CD8-positive, alpha-beta T cell (primary cell): ENCODE measurements at regions of chr20 and their contacts with region 1.

Region 1: GRCh38 chr20:8352486-8352885 is 220.4 kb downstream of the PLCB1 start:
- DNase-seq: no peak
- ATAC-seq: no peak
- H3K4me3 ChIP-seq: no peak overlapping the region
- H3K4me3 Mint-ChIP-seq: no peak overlapping the region
- H3K27ac ChIP-seq: no peak overlapping the region
- H3K27ac Mint-ChIP-seq: no peak overlapping the region
- H3K4me1 ChIP-seq: no peaks in the 10 kb centered on the region
- H3K4me1 Mint-ChIP-seq: no peaks in the 10 kb centered on the region
- H3K27me3 ChIP-seq: no peaks in the 10 kb centered on the region
- H3K27me3 Mint-ChIP-seq: no peaks in the 10 kb centered on the region
- CTCF ChIP-seq: no peak

Region 2: DNA sequence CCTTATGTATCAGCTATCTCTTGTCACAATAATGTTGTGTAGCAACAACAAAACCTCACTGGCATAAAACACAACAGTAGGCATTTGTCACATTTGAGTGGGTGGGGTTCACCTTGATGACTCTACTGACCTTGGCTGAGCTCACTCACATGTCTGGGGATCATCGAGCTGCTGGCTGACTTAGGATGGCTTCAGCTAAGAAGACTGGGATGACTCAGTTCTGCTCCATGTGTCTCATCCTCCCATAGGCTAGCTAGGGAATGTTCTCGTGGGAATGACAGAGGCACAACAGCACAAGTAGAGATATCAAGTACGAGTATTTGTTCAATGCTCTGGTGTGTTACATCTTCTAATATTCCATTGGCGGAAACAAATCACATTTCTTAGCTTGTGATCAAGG is 52.6 kb before region 1 on chr20:
- CTCF ChIA-PET with region 1: no interaction called
- POLR2A ChIA-PET with region 1: no interaction called
- intact Hi-C with region 1: loop called in 1 of 2 experiments (anchors 5 kb)
- DNase-seq: no peak
- ATAC-seq: no peak
- H3K4me3 ChIP-seq: no peak overlapping the region
- H3K4me3 Mint-ChIP-seq: no peak overlapping the region
- H3K27ac ChIP-seq: no peak overlapping the region
- H3K27ac Mint-ChIP-seq: no peak overlapping the region
- H3K4me1 ChIP-seq: peaks cover 1% of the 10 kb centered on the region
- H3K4me1 Mint-ChIP-seq: peaks cover under 1% of the 10 kb centered on the region
- H3K27me3 ChIP-seq: no peaks in the 10 kb centered on the region
- H3K27me3 Mint-ChIP-seq: no peaks in the 10 kb centered on the region
- CTCF ChIP-seq: no peak